GM12878 (cell line): ENCODE measurements at regions of chr4 and their contacts with region 1.

Region 1: DNA sequence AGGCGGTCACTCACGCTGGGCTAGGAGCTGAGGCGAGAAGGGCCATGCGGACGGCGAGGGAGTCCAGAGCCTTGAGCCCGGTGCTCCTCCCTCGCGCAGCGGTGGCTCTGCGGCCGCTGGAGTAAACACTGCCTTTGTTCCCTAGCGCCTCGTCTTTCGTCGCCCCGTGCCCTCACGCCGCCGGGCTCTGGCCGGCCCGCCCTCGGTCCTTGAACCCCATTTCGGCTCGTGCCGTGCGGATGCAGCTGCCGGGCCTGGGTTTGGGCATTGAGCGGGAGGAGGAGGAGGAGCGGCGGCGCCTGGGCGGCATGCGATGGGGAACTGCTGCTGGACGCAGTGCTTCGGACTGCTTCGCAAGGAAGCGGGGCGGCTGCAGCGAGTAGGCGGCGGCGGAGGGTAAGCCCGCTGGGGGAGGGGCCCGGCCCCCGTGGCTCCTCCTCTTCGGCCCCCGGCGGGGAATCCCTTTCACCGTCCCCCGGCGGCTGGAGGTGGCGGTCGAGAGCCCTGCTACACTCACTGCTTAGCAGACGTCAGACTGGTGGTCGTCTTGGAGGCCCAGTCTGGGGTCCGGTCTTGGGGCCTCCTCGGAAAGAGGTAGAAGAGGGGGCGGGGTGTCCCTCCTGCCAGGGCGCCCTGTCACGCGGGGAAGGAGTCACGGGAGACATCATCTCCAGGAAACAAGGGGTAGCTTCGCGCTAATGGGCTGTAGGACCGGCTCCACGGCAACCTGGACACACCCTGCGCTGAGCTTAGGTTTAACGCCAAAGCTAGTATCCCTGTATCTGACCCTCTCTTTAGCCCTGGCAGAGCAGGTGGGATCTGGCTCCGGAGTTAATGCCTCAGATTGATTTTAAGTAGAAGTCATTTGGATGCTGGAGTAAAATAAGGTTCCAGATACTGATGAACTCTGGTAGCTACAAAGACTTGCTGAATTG is at the start of gene AP1AR:
- DNase-seq: peak; percentile 35
- ATAC-seq: peak; percentile 82
- H3K4me3 ChIP-seq: peak within 1 kb of the TSS; percentile 88
- H3K27ac ChIP-seq: peak within 1 kb of the TSS; percentile 93
- H3K4me1 ChIP-seq: no peaks in the 10 kb centered on the region
- H3K27me3 ChIP-seq: no peaks in the 10 kb centered on the region
- CTCF ChIP-seq: peak; percentile 40 to 61 (median 52)
- EP300 ChIP-seq: no peak
- POLR2A ChIP-seq: peak; percentile 94
- RAD21 ChIP-seq: peak; percentile 28; the same call in 1 of the 2 replicates
- polyA plus RNA-seq, gene AP1AR: 5.6 to 7.2 TPM

Region 2: DNA sequence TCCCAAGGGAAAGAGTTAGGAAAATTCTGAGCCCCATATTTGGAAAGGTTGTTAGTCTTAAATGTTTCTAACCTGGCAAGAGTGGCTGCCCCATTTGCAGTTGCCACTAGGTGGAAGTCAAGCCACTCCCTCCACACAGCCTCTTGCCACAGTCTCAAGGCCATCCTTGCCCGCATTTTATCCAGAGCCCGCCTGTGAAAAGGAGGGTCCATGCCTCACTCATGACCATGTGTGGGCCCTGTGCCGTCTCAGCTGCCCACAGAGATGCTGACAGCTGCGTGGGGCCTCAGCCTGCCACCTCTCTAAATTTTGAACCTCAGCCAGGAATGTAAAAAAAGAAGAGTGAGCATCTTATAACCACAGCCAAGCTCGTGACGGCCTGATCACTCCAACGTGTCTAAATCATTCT is 288.2 kb before region 1 on chr4:
- CTCF ChIA-PET with region 1: no interaction called
- POLR2A ChIA-PET with region 1: no interaction called
- RAD21 ChIA-PET with region 1: no interaction called
- SMC1A ChIA-PET with region 1: interaction called, 3 read pairs
- in situ Hi-C with region 1: no loop called
- intact Hi-C with region 1: loop called (anchors 10 kb)
- DNase-seq: no peak
- ATAC-seq: peak; percentile 99
- H3K4me3 ChIP-seq: no peak overlapping the region
- H3K27ac ChIP-seq: no peak overlapping the region
- H3K4me1 ChIP-seq: no peaks in the 10 kb centered on the region
- H3K27me3 ChIP-seq: no peaks in the 10 kb centered on the region; a peak in 1 of 4 replicates
- CTCF ChIP-seq: peak; percentile 60 to 83 (median 70)
- EP300 ChIP-seq: no peak
- POLR2A ChIP-seq: no peak
- RAD21 ChIP-seq: peak; percentile 48

Region 3: GRCh38 chr4:112145326-112145819 is 86.7 kb before region 1 on chr4 and contains the start of gene FAM241A:
- CTCF ChIA-PET with region 1: interaction called, 6 read pairs
- POLR2A ChIA-PET with region 1: no interaction called
- RAD21 ChIA-PET with region 1: interaction called, 4 read pairs
- SMC1A ChIA-PET with region 1: interaction called, 7 read pairs
- in situ Hi-C with region 1: no loop called
- intact Hi-C with region 1: loop called (anchors 2 kb)
- DNase-seq: no peak
- ATAC-seq: peak; percentile 97
- H3K4me3 ChIP-seq: peak within 1 kb of the TSS; percentile 76
- H3K27ac ChIP-seq: no peak within 1 kb of the TSS
- H3K4me1 ChIP-seq: peaks cover 5% of the 10 kb centered on the region; the same call in 1 of the 2 replicates
- H3K27me3 ChIP-seq: peaks cover 0 to 2% of the 10 kb centered on the region in 2 experiments; a peak in 2 of 4 replicates
- CTCF ChIP-seq: no peak
- EP300 ChIP-seq: no peak
- POLR2A ChIP-seq: peak; percentile 93
- RAD21 ChIP-seq: no peak
- polyA plus RNA-seq, gene FAM241A: 0.82 to 1.4 TPM

Region 4: GRCh38 chr4:112257098-112257497 is 25.1 kb after region 1 on chr4:
- CTCF ChIA-PET with region 1: interaction called, 7 read pairs
- POLR2A ChIA-PET with region 1: no interaction called
- RAD21 ChIA-PET with region 1: no interaction called
- SMC1A ChIA-PET with region 1: interaction called, 10 read pairs
- in situ Hi-C with region 1: no loop called
- intact Hi-C with region 1: no loop called
- DNase-seq: no peak
- ATAC-seq: no peak
- H3K4me3 ChIP-seq: no peak overlapping the region
- H3K27ac ChIP-seq: no peak overlapping the region
- H3K4me1 ChIP-seq: no peaks in the 10 kb centered on the region
- H3K27me3 ChIP-seq: no peaks in the 10 kb centered on the region
- CTCF ChIP-seq: no peak
- EP300 ChIP-seq: no peak
- POLR2A ChIP-seq: no peak
- RAD21 ChIP-seq: no peak

Region 5: GRCh38 chr4:112284662-112285411 is 52.8 kb after region 1 on chr4:
- CTCF ChIA-PET with region 1: interaction called, 7 read pairs
- POLR2A ChIA-PET with region 1: interaction called, 16 read pairs
- RAD21 ChIA-PET with region 1: interaction called, 10 read pairs
- SMC1A ChIA-PET with region 1: interaction called, 4 read pairs
- in situ Hi-C with region 1: no loop called
- intact Hi-C with region 1: loop called (anchors 2 kb)
- DNase-seq: no peak
- ATAC-seq: peak; percentile 23
- H3K4me3 ChIP-seq: peak overlapping the region; percentile 80
- H3K27ac ChIP-seq: peak overlapping the region; percentile 99
- H3K4me1 ChIP-seq: peaks cover 19% of the 10 kb centered on the region
- H3K27me3 ChIP-seq: no peaks in the 10 kb centered on the region
- CTCF ChIP-seq: no peak
- EP300 ChIP-seq: 0 out of 4 replicates have a peak, but pooled peaks of 1 of the 2 experiments have one; percentile 2
- POLR2A ChIP-seq: no peak
- RAD21 ChIP-seq: no peak

Region 6: DNA sequence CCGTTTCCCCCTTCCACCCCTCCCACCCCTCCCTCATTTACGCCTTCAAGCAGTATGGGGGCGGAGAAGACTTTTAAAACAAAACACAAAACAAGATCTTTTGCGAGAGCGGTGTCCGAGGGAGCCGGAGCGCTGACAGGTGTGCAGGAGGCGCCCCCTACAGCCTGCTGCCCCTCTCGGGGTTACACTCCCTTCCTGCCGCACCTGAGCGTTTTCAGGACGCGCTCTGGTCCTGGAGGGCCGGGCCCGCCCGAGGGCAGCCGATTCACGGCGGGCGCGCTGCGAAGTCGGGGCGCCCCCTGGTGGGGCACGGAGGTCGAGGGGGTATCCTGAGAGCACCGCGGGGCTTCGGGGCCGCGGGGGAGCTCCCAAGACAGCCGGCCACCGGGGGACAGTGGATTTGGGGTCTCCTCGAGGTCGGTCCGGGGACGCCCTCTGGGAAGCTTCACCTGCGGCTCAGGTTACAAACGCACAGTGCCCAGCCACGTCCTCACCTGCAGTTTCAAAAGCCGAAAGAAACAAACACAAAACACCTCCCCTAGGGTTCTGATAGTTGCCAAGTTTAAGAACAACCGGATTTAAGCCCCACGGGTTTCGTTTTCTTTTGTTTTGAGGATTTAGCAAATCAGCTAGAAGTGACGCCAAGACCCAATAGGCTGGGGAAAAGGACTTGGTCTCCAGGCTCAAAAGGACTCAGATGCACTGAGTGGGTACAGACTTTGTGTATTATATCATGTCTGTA is 291.9 kb after region 1 on chr4:
- CTCF ChIA-PET with region 1: interaction called, 11 read pairs
- POLR2A ChIA-PET with region 1: interaction called, 7 read pairs
- RAD21 ChIA-PET with region 1: interaction called, 5 read pairs
- SMC1A ChIA-PET with region 1: interaction called, 3 read pairs
- in situ Hi-C with region 1: no loop called
- intact Hi-C with region 1: loop called (anchors 5 kb)
- DNase-seq: no peak
- ATAC-seq: peak; percentile 96
- H3K4me3 ChIP-seq: peak overlapping the region; percentile 73; the same call in 1 of the 2 replicates
- H3K27ac ChIP-seq: no peak overlapping the region
- H3K4me1 ChIP-seq: peaks cover 3% of the 10 kb centered on the region
- H3K27me3 ChIP-seq: no peaks in the 10 kb centered on the region; a peak in 2 of 4 replicates
- CTCF ChIP-seq: peak; percentile 88 to 92 (median 90)
- EP300 ChIP-seq: no peak
- POLR2A ChIP-seq: no peak
- RAD21 ChIP-seq: peak; percentile 85

Region 7: DNA sequence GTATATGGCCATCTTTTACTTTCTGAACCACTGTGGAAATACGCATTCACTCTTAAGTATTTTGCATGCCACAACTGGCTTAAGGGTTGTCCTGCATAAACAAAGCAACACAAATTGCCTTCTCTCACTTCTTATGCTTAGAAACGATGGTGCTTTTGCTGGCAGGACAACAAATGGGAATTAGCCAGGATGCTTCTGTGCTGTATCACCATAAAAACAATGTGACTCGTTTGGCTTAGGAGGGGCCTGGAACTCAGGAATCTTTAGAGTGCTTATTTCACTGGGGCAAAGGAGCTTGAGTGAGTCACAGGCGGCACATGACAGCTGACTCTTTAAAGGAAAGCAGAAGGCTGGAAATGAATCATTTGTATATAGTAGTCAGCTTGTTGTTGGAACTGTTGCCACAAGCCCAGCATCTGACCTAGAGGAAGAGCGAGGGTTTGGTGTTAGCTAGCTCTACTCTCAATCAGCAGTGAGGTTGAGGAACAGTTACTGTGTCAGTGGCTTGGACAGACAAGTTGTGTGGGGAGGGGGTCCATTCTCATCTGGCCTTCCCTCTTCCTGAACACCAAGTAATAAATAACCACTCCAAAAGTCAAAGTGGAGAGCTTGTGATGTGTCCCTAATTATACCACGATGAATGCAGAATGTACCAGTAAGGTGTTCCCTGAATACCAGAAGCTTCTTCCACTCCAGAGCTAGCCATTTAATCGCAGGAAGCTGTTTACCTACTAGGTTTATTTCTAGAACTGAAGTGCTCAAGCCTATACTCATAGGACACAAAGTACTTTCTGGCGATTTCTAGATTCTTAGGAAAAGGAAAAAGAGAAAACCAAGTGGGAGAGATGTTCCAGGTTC is 1236.3 kb after region 1 on chr4:
- CTCF ChIA-PET with region 1: no interaction called
- POLR2A ChIA-PET with region 1: no interaction called
- RAD21 ChIA-PET with region 1: no interaction called
- SMC1A ChIA-PET with region 1: no interaction called
- in situ Hi-C with region 1: no loop called
- intact Hi-C with region 1: no loop called
- DNase-seq: no peak
- ATAC-seq: no peak; the same call in 2 of the 3 replicates
- H3K4me3 ChIP-seq: no peak overlapping the region
- H3K27ac ChIP-seq: no peak overlapping the region
- H3K4me1 ChIP-seq: no peaks in the 10 kb centered on the region
- H3K27me3 ChIP-seq: no peaks in the 10 kb centered on the region
- CTCF ChIP-seq: no peak
- EP300 ChIP-seq: no peak
- POLR2A ChIP-seq: no peak
- RAD21 ChIP-seq: no peak